BJ (cell line): ENCODE measurements at regions of chr12 and their contacts with region 1.

Region 1: DNA sequence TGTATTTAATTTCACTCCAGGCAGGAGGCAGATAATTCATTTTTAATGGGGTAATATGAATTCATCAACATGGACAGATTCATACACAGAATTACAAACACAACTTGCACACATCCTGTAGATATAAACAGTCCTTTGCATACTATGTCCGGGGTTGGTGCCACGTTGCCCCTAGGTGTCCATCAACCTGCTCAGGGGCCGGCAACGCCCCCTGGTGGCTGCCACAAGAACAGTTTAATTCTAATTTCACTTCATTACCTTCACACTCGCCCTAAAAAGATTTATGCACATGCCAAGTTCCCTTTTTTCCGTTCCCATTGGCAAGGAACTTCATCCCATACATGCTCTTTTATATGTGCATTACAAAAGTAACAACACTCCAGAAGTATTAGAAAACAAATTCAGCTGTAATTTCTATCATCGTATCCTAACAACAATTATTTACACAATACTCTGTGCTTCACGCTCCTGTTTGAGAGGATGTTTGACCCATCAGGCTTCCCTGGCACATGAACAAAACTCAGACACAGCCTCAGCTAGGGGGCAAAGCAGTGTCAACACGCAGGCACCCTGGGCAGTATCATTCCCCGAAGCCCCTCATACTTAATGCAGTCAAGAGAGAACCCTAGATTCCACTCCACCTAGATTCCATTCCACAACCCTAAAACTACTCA is 15.5 kb downstream of the MANSC1 start:
- DNase-seq: no peak
- H3K4me3 ChIP-seq: no peak overlapping the region
- H3K27me3 ChIP-seq: no peaks in the 10 kb centered on the region
- CTCF ChIP-seq: peak; percentile 74

Region 2: GRCh38 chr12:12349711-12350665 is 15.5 kb after region 1 on chr12 and contains the start of gene MANSC1:
- CTCF ChIA-PET with region 1: interaction called, 12 read pairs
- POLR2A ChIA-PET with region 1: no interaction called
- DNase-seq: no peak
- H3K4me3 ChIP-seq: peak within 1 kb of the TSS; percentile 62
- H3K27me3 ChIP-seq: no peaks in the 10 kb centered on the region
- CTCF ChIP-seq: peak; percentile 38
- polyA plus RNA-seq, gene MANSC1: 2.4 and 3.4 TPM in 2 replicates